ENCODE measurements at regions of chr6 and their contacts with region 1.

Region 1: DNA sequence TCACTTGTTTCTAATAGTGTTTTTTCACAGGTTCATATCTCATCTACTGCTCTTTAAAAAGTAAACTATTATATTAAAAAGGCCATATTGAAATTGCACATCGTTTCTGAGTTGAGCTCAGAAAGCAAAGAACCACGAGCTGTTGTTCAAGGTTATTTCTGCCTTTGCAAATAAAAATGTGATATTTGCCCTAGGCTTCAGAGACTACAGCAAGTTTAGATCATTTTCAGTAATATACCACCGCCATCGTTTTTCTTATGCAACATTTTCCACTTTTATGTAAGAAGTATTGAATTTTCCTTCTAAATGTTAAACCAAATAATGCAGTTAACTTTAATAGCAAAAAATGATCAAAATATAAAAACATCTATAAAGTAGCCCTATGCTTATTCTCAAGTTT is 71.1 kb downstream of the DST start:
- DNase-seq: no peak
- ATAC-seq: no peak
- H3K4me3 ChIP-seq: no peak overlapping the region
- H3K4me3 Mint-ChIP-seq: no peak overlapping the region
- H3K27ac ChIP-seq: no peak overlapping the region
- H3K27ac Mint-ChIP-seq: no peak overlapping the region
- H3K4me1 ChIP-seq: no peaks in the 10 kb centered on the region
- H3K4me1 Mint-ChIP-seq: no peaks in the 10 kb centered on the region
- H3K27me3 ChIP-seq: no peaks in the 10 kb centered on the region
- H3K27me3 Mint-ChIP-seq: no peaks in the 10 kb centered on the region

Region 2: DNA sequence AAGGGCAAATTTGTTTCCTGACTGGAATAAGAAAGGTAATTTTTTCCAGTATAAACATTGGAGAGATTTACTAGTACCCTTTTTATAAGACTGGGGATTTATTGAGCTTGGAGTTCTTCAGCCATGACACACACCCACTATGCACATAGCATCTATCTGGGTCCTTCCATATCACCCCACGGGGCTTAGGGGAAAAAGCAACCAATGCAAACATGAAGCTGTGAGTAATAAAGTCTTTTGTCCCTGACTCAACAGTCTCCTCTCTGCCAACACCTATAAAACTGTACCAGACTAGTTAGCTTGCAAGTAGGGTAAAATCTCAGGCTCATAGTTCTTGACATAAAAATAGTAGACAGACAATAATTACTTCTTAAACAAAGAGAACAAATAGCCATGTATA is 347.6 kb before region 1 on chr6:
- CTCF ChIA-PET with region 1: no interaction called
- POLR2A ChIA-PET with region 1: no interaction called
- DNase-seq: no peak
- ATAC-seq: no peak
- H3K4me3 ChIP-seq: no peak overlapping the region
- H3K4me3 Mint-ChIP-seq: no peak overlapping the region
- H3K27ac ChIP-seq: no peak overlapping the region
- H3K27ac Mint-ChIP-seq: no peak overlapping the region
- H3K4me1 ChIP-seq: no peaks in the 10 kb centered on the region
- H3K4me1 Mint-ChIP-seq: no peaks in the 10 kb centered on the region
- H3K27me3 ChIP-seq: no peaks in the 10 kb centered on the region
- H3K27me3 Mint-ChIP-seq: no peaks in the 10 kb centered on the region

Region 3: DNA sequence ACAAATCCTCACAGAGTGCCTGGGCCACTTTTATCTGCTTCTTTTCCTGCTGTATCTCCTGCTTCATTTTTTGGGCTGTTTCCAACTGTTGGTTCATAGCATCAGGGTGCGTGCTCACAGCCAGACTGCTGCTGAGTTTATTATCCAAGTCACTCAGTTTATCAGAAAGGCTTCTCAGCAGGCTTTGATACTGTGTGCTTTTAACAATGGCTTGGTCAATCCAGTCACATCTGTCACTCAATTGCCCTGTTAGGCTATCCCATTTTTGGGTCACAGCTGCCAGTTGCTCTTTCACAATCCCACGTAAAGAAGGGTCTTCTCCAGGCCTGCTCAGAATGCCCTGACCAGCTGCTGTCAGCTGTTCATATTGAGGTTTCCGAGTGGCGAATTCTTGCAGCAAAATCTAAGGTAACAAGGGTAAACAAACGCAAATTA is 16.1 kb before region 1 on chr6:
- CTCF ChIA-PET with region 1: no interaction called
- POLR2A ChIA-PET with region 1: no interaction called
- DNase-seq: no peak
- ATAC-seq: no peak
- H3K4me3 ChIP-seq: no peak overlapping the region
- H3K4me3 Mint-ChIP-seq: no peak overlapping the region
- H3K27ac ChIP-seq: no peak overlapping the region
- H3K27ac Mint-ChIP-seq: no peak overlapping the region
- H3K4me1 ChIP-seq: no peaks in the 10 kb centered on the region
- H3K4me1 Mint-ChIP-seq: no peaks in the 10 kb centered on the region
- H3K27me3 ChIP-seq: no peaks in the 10 kb centered on the region
- H3K27me3 Mint-ChIP-seq: no peaks in the 10 kb centered on the region

Region 4: GRCh38 chr6:56922645-56923044 is 351.0 kb after region 1 on chr6:
- CTCF ChIA-PET with region 1: interaction called in 1 of 2 experiments, 10 read pairs
- POLR2A ChIA-PET with region 1: no interaction called
- DNase-seq: no peak
- ATAC-seq: no peak
- H3K4me3 ChIP-seq: no peak overlapping the region
- H3K4me3 Mint-ChIP-seq: no peak overlapping the region
- H3K27ac ChIP-seq: no peak overlapping the region
- H3K27ac Mint-ChIP-seq: no peak overlapping the region
- H3K4me1 ChIP-seq: no peaks in the 10 kb centered on the region
- H3K4me1 Mint-ChIP-seq: no peaks in the 10 kb centered on the region
- H3K27me3 ChIP-seq: peaks cover 0 to 9% of the 10 kb centered on the region in 2 experiments
- H3K27me3 Mint-ChIP-seq: peaks cover 25 to 31% of the 10 kb centered on the region in 2 donors

Measured in T-cell (primary cell).